Activated CD4-positive, alpha-beta memory T cell treated with anti-CD3 and anti-CD28 coated beads for 36 hours (primary cell): ENCODE measurements at regions of chr12 and their contacts with region 1.

Region 1: GRCh38 chr12:124774462-124775167 is 89.0 kb downstream of the SCARB1 start:
- DNase-seq: peak; percentile 94
- H3K4me3 Mint-ChIP-seq: peak overlapping the region; percentile 23
- H3K27ac Mint-ChIP-seq: peak overlapping the region; percentile 91
- H3K4me1 Mint-ChIP-seq: peaks cover 45% of the 10 kb centered on the region
- H3K27me3 Mint-ChIP-seq: peaks cover 26% of the 10 kb centered on the region

Region 2: DNA sequence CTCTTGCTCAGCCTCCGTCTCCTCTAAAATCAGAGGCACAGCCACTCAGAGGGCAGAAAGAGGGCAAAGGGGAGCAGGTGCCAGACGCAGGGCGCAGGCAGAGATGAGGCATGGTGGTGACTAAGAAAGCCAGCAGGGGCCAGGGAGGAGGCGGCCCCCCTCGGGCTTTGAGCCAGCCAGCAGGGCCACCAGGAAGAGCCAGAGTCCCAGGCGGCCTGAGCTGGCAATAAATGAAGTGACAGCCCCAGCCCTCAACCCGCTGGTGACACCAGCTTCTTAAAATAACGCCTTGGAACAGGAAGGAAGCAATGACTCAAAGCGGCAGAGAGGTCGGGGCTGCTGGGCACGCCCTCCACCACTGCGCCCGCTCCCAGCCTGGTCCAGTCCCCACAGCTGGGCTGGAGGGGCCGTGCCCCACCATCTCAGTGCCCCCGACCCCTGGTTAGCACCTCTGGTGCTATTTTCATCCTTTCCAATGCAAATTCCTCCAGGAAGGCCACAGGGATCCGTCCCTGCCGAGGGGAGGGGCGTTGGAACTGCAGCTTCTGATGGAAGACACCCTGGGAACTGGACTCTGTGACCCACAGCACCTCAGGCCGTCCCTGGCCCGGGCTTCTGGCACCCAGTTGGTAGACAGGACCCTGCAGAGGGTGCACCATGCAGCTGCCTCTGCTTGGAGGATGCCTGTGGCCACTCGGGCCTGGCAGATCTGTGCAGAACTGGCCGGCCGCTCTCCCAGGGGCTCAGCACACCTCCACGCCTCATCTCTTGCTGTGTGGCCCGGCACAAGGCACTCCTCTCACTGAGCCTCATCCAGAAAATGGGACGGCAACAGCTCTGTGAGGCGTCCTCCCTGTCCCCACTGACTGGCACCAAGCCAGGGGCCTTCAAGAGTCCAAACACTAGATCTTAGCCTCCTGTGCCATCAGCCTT is 320.9 kb before region 1 on chr12:
- CTCF ChIA-PET with region 1: interaction called, 8 read pairs
- POLR2A ChIA-PET with region 1: no interaction called
- intact Hi-C with region 1: loop called (anchors 1 kb)
- DNase-seq: peak; percentile 94
- H3K4me3 Mint-ChIP-seq: peak overlapping the region; percentile 12
- H3K27ac Mint-ChIP-seq: peak overlapping the region; percentile 54
- H3K4me1 Mint-ChIP-seq: peaks cover 52% of the 10 kb centered on the region
- H3K27me3 Mint-ChIP-seq: no peaks in the 10 kb centered on the region

Region 3: DNA sequence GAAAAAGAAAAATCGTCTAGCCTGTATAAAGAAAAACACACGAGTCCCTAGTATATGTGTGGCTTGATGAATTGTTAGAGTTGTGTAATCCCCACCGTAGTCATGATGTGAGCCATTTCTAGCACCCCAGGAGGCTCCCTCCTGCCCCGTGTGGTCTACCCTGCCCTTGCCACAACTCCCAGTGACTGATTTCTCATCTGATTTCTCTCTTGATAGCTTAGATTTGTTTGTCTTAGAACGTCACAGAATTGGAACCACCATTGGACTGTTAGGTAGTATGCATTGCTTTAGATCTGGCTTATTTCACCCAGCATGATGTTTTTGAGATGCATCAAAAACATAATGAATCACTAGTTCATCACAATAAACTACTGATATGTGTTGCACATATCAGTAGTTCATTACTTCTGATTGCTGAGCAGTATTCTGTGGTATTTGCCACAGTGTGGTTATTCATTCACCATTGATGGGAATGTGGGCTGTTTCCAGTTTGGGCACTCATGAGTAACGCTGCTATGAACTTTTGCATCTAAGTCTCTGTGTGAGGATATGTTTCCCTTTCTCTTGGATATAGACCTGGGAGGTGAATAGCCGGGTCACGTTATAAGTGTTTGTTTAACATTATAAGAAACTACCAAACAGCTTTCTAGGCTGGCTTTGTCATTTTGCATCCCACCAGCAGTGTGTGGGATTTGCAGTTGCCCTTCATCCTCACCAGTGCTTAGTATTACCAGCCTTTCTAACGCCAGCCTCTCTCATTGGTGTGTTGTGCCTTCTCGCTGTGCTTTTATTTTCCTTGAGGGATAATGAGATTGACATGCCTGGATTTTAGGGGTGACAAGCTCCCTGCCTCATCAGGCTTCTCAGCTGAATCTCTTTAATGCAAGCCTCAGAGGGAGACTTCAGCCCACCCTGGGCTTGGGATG is 175.3 kb before region 1 on chr12:
- CTCF ChIA-PET with region 1: no interaction called
- POLR2A ChIA-PET with region 1: interaction called, 4 read pairs
- intact Hi-C with region 1: loop called (anchors 1 kb)
- DNase-seq: peak; percentile 71
- H3K4me3 Mint-ChIP-seq: no peak overlapping the region
- H3K27ac Mint-ChIP-seq: no peak overlapping the region
- H3K4me1 Mint-ChIP-seq: peaks cover 10% of the 10 kb centered on the region
- H3K27me3 Mint-ChIP-seq: peaks cover 13% of the 10 kb centered on the region

Region 4: GRCh38 chr12:124761871-124762270 is 12.7 kb before region 1 on chr12:
- CTCF ChIA-PET with region 1: interaction called, 16 read pairs
- POLR2A ChIA-PET with region 1: interaction called, 3 read pairs
- intact Hi-C with region 1: loop called (anchors 1 kb)
- DNase-seq: peak; percentile 66
- H3K4me3 Mint-ChIP-seq: no peak overlapping the region
- H3K27ac Mint-ChIP-seq: no peak overlapping the region
- H3K4me1 Mint-ChIP-seq: peaks cover 23% of the 10 kb centered on the region
- H3K27me3 Mint-ChIP-seq: peaks cover 19% of the 10 kb centered on the region

Region 5: GRCh38 chr12:124863416-124864325 is 89.1 kb after region 1 on chr12 and contains the start of gene SCARB1:
- CTCF ChIA-PET with region 1: no interaction called
- POLR2A ChIA-PET with region 1: no interaction called
- intact Hi-C with region 1: loop called (anchors 2 kb)
- DNase-seq: peak; percentile 88
- H3K4me3 Mint-ChIP-seq: peak within 1 kb of the TSS; percentile 71
- H3K27ac Mint-ChIP-seq: peak within 1 kb of the TSS; percentile 44
- H3K4me1 Mint-ChIP-seq: peaks cover 18% of the 10 kb centered on the region
- H3K27me3 Mint-ChIP-seq: peaks cover 3% of the 10 kb centered on the region
- total RNA-seq, gene SCARB1: 11.4 to 12.8 TPM

Region 6: DNA sequence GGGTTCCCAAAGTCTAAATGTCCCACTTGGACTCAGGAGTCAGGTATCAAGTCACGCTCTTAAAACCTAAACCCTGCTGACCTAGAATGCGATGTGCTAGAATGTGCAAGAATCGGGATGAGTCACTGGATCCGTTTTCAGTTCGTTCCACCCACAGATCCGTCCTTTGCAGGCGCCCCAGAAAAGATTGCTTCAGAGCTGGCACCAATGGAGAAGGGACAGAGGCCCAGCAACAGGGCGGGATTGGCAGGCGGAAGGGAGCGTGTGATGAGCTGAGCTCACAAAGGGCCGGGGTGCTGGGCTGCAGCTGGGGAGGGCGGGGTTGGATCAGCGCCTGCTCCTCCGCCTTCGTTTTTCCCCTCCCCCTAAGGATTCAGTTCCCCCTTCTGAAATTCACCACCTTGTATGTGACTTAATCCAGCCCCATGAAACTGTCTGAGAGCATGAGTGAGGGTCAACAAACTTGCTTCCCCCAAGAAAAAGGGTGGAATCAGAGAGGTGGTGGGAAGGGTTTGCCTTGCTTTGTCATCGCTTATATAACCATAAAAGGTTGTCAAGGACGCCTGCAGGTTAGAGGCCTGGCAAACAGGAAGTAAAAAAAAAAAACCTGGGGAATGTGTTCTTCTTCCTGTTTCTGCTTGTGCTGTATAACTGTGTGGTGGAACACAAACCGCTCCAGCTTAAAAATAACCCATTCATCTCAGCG is 142.7 kb after region 1 on chr12:
- CTCF ChIA-PET with region 1: interaction called, 5 read pairs
- POLR2A ChIA-PET with region 1: interaction called, 8 read pairs
- intact Hi-C with region 1: loop called (anchors 1 kb)
- DNase-seq: peak; percentile 97
- H3K4me3 Mint-ChIP-seq: peak overlapping the region; percentile 100
- H3K27ac Mint-ChIP-seq: peak overlapping the region; percentile 100
- H3K4me1 Mint-ChIP-seq: peaks cover 93% of the 10 kb centered on the region
- H3K27me3 Mint-ChIP-seq: peaks cover 15% of the 10 kb centered on the region